Activated T-helper 1 cell treated with anti-CD3 and anti-CD28 coated beads, Interleukin-12 subunit alpha, Interleukin-12 subunit beta, Interleukin-2, Interleukin-4 antibody, amounts not matched to agents 30 ng/mL and 10 ng/mL and 1 ng/mL, durations not matched to agents 14 hours and 24 hours and 36 hours (primary cell): ENCODE measurements at regions of chr7 and their contacts with region 1.

Region 1: DNA sequence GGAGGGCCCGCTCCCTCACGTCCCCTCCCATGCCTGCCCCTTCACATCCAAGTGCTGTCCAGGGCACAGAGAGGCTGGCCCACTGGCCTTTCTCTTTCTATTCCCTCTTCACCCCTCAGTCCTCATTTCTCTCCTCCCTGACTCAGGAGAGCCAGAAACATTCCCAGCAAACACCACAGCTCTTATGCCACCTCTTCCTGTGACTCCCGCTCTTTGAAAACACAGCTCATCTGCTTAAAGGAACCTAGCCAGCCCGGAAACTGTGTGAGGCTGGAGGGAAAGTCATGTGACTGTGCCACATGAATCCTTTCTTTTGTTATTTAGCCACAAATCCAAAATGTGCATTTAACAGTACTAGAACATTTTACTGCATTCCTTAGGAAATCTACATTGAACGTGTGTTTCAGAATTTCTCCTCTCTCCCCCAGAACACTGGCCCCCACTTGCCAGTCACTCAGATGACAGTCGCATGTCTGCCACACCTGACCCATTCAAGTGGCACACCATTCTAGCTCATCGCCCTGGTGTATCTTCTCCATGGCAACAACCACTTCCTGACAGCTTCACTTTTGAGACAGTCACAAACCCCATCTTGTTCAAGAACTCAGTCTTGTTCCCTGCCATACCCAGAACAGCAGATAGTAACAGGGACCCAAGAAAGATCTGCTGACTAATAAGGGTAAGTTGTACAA is 42.8 kb downstream of the GRB10 start:
- DNase-seq: peak; percentile 63
- H3K4me3 Mint-ChIP-seq: peak overlapping the region; percentile 16
- H3K27ac Mint-ChIP-seq: peak overlapping the region; percentile 37
- H3K4me1 Mint-ChIP-seq: peaks cover 10% of the 10 kb centered on the region
- H3K27me3 Mint-ChIP-seq: no peaks in the 10 kb centered on the region

Region 2: GRCh38 chr7:50832744-50833143 is 92.9 kb after region 1 on chr7:
- intact Hi-C with region 1: loop called (anchors 5 kb)
- DNase-seq: peak; percentile 42
- H3K4me3 Mint-ChIP-seq: peak overlapping the region; percentile 45
- H3K27ac Mint-ChIP-seq: peak overlapping the region; percentile 30
- H3K4me1 Mint-ChIP-seq: peaks cover 45% of the 10 kb centered on the region
- H3K27me3 Mint-ChIP-seq: peaks cover 21% of the 10 kb centered on the region